Activated CD4-positive, alpha-beta T cell treated with anti-CD3 and anti-CD28 coated beads, Interleukin-2, amount 10 ng/mL, durations not matched to agents 24 days and 14 days (primary cell): ENCODE measurements at regions of chr3 and their contacts with region 1.

Region 1: GRCh38 chr3:132416807-132417694 is at the start of gene DNAJC13:
- DNase-seq: peak; percentile 97
- H3K4me3 Mint-ChIP-seq: peak within 1 kb of the TSS; percentile 98
- H3K27ac Mint-ChIP-seq: peak within 1 kb of the TSS; percentile 95
- H3K4me1 Mint-ChIP-seq: peaks cover 25% of the 10 kb centered on the region
- H3K27me3 Mint-ChIP-seq: peaks cover 3% of the 10 kb centered on the region
- total RNA-seq, gene DNAJC13: 33.6 and 34.0 TPM in 2 replicates

Region 2: DNA sequence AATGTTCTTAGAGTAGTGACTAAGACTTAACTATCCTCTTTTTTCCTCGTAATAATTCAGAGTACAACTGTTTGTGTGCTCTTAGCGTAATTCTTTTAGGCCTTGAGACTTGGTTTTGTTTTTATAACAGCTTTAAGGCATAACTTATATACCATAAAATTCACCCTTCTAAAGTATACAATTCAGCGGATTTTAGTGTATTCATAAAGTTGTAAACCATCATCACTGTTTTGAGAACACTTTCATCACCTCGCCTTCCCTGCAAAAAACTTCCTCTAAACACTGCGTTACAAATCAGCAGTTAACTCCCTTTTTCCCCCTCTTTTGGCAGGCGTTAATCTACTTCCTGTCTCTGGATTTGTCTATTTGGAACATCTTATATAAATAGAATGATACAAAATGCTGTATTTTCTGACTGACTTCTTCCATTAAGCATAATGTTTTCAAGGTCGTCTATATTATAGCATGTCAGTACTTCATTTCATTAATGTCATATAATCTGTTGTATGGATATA is 18.9 kb after region 1 on chr3:
- intact Hi-C with region 1: loop called (anchors 2 kb)
- DNase-seq: no peak
- H3K4me3 Mint-ChIP-seq: no peak overlapping the region
- H3K27ac Mint-ChIP-seq: no peak overlapping the region
- H3K4me1 Mint-ChIP-seq: peaks cover 12% of the 10 kb centered on the region
- H3K27me3 Mint-ChIP-seq: no peaks in the 10 kb centered on the region

Region 3: DNA sequence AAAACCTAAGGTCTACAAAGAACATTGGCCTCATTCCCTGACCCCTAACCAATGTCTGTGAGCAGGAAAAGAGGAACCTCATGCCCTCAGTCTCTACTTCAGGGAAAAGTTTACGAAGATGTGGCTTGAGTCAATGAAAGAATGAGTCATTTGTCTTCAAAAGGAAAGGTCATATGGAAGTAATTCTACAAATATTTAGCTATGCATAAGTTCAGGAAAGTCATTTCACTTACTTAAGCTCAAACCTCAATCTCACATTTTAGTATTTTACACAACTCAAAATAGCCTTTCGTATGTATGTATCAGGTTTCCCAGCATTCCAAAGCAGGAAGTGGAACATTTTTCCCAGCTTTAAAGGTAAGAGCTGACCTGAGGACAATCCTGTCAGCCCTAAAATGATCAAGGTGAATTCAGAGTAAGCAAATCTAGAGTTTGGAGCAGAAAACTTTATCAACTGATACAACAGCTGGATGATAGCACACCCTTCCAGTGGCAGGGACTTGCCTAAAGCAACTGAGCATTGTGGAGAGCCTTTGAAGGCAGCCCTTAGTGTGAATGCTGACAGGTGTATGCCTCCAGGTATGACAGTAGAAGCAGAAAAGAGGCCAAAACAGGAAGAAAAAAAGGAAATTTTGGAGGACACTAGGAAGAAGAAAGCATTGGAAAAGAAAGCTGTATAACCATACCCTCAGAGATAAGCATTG is 126.1 kb after region 1 on chr3:
- intact Hi-C with region 1: loop called (anchors 5 kb)
- DNase-seq: no peak
- H3K4me3 Mint-ChIP-seq: peak overlapping the region; percentile 62
- H3K27ac Mint-ChIP-seq: peak overlapping the region; percentile 97
- H3K4me1 Mint-ChIP-seq: peaks cover 33% of the 10 kb centered on the region
- H3K27me3 Mint-ChIP-seq: no peaks in the 10 kb centered on the region

Region 4: DNA sequence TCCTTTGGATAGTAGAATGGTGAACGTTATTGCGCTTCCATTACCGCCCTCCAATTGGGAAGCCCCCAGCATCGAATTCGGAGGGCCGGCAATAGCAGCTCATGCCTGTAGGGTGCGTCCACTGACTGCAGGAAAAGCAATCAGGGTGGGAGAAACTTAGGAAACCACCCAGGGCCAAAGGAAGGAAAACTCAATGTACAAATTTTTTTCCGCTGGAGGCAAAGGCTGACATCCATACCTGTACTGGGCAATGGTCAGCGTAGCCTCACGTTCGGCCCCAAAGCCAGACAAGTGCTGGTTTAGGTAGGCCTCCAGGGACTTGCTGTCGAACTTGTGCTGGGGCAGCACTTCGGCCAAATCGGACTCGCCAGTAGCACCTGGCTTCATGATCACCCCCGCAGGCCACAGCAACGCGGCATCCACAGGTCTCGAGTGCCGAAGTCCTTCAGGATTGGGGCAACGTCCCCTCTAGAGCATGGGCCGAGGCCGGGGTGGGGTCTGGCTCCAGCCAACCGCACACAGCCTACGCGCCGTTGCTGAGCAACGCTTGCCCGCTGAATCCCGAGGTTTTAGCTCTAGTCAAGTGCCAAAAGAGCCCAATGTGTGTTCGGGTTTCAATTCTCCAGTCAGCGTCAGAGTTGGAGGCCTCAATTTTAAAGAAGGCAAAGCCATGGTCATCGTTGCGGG is 242.5 kb after region 1 on chr3 and contains the start of gene ACAD11:
- intact Hi-C with region 1: loop called (anchors 1 kb)
- DNase-seq: peak; percentile 76
- H3K4me3 Mint-ChIP-seq: peak within 1 kb of the TSS; percentile 99
- H3K27ac Mint-ChIP-seq: peak within 1 kb of the TSS; percentile 98
- H3K4me1 Mint-ChIP-seq: peaks cover 39% of the 10 kb centered on the region
- H3K27me3 Mint-ChIP-seq: no peaks in the 10 kb centered on the region
- total RNA-seq, gene ACAD11: 12.9 and 18.9 TPM in 2 replicates